Dendritic cell treated with granulocyte-macrophage colony-stimulating factor and Interleukin-4, amounts not matched to agents 40 ng/mL and 50 ng/mL, for 4 days (primary cell): ENCODE measurements at regions of chr18 and their contacts with region 1.

Region 1: DNA sequence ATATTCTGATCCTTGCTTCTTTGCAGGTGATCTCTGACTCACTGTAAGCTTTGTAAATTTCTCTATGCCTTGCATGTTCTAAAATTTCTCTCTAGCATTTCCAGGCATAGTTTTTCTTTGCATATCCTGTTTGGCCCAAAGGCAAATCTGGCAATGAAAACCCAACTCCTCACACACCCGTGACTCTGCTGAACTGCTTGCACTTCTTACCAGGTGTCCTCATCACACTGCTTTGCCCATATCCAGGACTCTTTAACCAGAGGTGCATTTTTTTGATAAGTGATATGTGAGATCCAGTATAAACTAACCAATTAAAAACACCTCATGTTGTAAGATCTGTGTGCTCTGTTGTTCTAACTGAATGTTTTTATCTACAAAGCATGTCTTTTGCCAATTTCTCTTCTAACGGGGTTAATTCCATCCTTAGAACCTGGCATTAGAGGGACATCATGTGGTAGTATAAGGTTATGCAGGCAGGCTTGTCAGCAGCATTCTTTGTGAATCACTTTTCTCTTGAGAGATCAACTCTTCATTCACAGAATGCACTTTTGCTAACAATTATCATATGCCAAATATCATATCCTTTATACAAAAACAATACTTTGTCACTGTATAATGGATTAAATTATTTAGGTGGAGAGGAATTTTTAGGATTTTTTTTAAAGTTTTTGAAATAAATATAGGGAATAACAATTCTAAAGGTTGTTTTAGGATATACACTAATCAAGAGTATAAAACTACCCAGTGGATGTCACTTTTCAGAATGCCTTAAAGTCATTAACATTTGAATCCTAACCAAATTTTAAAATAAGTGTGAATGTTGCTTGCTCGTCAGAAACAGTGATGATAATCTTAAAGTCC is 20.8 kb upstream of the TMX3 start:
- H3K4me3 Mint-ChIP-seq: no peak overlapping the region
- H3K27ac Mint-ChIP-seq: no peak overlapping the region
- H3K4me1 Mint-ChIP-seq: peaks cover 9% of the 10 kb centered on the region
- H3K27me3 Mint-ChIP-seq: no peaks in the 10 kb centered on the region

Region 2: GRCh38 chr18:68660354-68661183 is 75.1 kb before region 1 on chr18:
- intact Hi-C with region 1: loop called (anchors 5 kb)
- H3K4me3 Mint-ChIP-seq: no peak overlapping the region
- H3K27ac Mint-ChIP-seq: no peak overlapping the region
- H3K4me1 Mint-ChIP-seq: peaks cover 10% of the 10 kb centered on the region
- H3K27me3 Mint-ChIP-seq: peaks cover 1% of the 10 kb centered on the region